Dendritic cell treated with granulocyte-macrophage colony-stimulating factor and Interleukin-4, amounts not matched to agents 40 ng/mL and 50 ng/mL, for 4 days (primary cell): ENCODE measurements at regions of chr3 and their contacts with region 1.

Region 1: DNA sequence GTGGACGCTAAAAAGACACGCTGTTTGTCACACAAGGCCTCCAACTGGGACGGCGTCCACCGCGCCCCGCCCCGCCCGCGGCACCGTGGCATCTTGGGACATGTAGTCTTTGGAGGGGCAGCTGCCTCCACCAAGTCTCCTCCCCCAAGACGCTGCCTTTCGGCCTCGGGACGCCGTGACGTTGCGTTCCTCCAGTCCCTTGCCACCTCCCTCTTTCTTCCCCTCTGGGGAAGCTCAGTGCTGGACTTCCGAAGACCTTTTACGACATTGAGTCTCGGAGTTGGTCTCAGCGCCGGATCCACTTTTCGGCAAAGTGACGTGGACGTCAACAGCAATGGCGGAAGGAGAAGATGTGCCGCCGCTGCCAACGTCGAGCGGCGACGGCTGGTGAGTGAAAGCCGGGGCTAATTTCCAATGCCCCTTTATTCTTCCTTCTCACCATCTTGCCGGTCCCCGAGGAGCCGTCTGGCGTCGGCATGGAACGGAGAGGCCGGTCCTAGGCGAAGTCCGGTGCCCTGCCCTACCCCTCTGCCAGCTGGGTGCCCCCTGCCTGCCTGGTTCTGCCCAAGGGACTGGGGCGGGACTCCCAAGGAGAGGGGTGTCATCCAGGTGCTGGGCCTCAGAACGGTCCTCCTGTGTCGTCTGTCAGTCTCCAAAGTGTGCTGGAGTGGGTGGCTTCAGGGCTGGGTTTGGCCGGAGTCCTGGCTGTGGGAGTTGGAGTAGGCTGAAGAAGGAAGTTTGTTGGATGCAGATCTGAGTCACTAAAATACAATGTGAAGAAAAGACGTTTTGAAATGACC is at the start of gene TBC1D23:
- H3K4me3 Mint-ChIP-seq: peak within 1 kb of the TSS; percentile 97
- H3K27ac Mint-ChIP-seq: peak within 1 kb of the TSS; percentile 92
- H3K4me1 Mint-ChIP-seq: peaks cover 43% of the 10 kb centered on the region
- H3K27me3 Mint-ChIP-seq: no peaks in the 10 kb centered on the region

Region 2: GRCh38 chr3:99817437-99818240 is 443.2 kb before region 1 on chr3 and contains the start of gene CMSS1:
- intact Hi-C with region 1: loop called (anchors 1 kb)
- H3K4me3 Mint-ChIP-seq: peak within 1 kb of the TSS; percentile 92
- H3K27ac Mint-ChIP-seq: peak within 1 kb of the TSS; percentile 96
- H3K4me1 Mint-ChIP-seq: peaks cover 10% of the 10 kb centered on the region
- H3K27me3 Mint-ChIP-seq: no peaks in the 10 kb centered on the region

Region 3: GRCh38 chr3:99895703-99896441 is 365.0 kb before region 1 on chr3:
- intact Hi-C with region 1: loop called (anchors 5 kb)
- H3K4me3 Mint-ChIP-seq: peak overlapping the region; percentile 56
- H3K27ac Mint-ChIP-seq: peak overlapping the region; percentile 95
- H3K4me1 Mint-ChIP-seq: peaks cover 22% of the 10 kb centered on the region
- H3K27me3 Mint-ChIP-seq: no peaks in the 10 kb centered on the region

Region 4: DNA sequence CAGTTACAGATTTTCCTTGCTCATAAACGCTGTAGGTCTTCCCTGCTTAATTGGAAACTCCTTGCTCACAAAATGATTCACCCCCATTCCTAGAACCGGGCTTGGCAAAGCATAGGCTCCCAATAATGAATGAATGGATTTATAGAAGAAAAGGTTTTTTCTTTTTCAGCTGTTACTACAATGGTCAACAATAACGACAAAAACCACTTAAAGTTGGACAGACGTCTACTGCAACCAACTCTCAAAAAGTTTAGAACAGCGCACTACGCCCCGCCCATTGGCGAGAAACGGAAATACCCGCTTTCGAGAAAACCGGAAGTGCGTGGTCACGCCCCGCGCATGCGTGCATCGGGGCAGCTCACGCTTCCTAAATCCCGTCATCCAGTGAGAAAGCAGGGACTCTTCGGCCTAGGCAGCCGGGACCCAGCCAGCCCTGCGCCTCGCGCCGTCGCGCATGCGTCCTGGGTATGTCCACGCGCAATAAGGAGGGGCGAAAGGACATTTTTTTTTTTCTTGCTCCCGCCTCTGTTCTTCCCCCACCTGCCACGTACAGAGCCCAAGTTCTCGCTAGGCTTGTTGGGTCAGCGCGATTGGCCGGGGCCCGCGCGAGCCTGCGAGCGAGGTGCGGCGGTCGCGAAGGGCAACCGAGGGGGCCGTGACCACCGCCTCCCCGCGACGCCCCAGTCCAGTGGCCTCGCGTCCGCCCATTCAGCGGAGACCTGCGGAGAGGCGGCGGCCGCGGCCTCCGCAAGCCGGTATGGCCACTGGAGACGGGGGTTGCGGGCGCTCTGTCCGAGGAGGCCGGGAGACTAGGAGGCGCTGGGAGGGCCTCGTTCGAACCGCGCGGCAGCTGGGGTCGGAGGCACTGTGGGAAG is 448.3 kb after region 1 on chr3 and contains the start of gene TFG:
- intact Hi-C with region 1: loop called (anchors 2 kb)
- H3K4me3 Mint-ChIP-seq: peak within 1 kb of the TSS; percentile 92
- H3K27ac Mint-ChIP-seq: peak within 1 kb of the TSS; percentile 96
- H3K4me1 Mint-ChIP-seq: peaks cover 38% of the 10 kb centered on the region
- H3K27me3 Mint-ChIP-seq: peaks cover 10% of the 10 kb centered on the region

Region 5: DNA sequence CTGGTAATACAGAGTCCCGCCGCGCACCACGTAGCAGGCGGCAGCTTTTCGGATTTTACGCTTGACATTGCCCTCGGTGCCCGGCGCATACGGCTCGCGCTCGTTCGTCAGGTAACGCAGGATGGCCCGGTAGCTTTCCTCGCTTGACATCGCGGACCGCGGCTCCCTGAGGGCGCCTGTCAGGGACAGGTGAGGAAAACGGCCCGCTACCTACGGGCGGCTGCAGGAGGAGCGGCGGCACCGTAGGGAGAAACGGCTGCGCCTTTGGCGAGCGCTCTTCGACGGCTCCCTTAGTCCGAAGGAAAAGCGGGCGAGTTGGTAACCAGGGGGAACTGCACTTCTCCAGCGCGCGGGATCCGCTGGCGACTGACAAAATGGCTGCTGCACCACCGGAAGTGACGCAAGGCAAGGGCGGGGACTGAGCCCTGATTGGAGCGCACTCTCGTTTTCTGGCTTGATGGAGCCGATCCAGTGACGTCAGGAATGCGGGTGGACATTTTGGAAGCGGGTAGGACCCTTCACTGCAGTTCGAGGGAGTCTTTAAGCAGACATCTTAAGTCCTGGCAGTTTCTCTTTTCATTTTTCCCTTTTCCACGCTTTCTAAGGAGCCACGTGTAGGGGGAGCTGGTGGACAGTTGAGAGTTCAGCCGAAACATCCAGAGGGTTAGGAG is 1416.0 kb after region 1 on chr3 and contains the start of gene ZBTB11:
- intact Hi-C with region 1: loop called (anchors 5 kb)
- H3K4me3 Mint-ChIP-seq: peak within 1 kb of the TSS; percentile 89
- H3K27ac Mint-ChIP-seq: peak within 1 kb of the TSS; percentile 98
- H3K4me1 Mint-ChIP-seq: peaks cover 46% of the 10 kb centered on the region
- H3K27me3 Mint-ChIP-seq: no peaks in the 10 kb centered on the region